ENCODE measurements at regions of chr6 and their contacts with region 1.

Region 1: GRCh38 chr6:161418463-161418945 is 144.6 kb upstream of the AGPAT4 start:
- DNase-seq: peak; percentile 82
- H3K4me3 Mint-ChIP-seq: no peak overlapping the region
- H3K27ac Mint-ChIP-seq: no peak overlapping the region
- H3K4me1 Mint-ChIP-seq: no peaks in the 10 kb centered on the region
- H3K27me3 Mint-ChIP-seq: no peaks in the 10 kb centered on the region
- CTCF ChIP-seq: peak; percentile 70

Region 2: GRCh38 chr6:160899671-160900430 is 518.7 kb before region 1 on chr6:
- CTCF ChIA-PET with region 1: no interaction called
- POLR2A ChIA-PET with region 1: no interaction called
- intact Hi-C with region 1: no loop called
- DNase-seq: no peak
- H3K4me3 Mint-ChIP-seq: no peak overlapping the region
- H3K27ac Mint-ChIP-seq: no peak overlapping the region
- H3K4me1 Mint-ChIP-seq: no peaks in the 10 kb centered on the region
- H3K27me3 Mint-ChIP-seq: no peaks in the 10 kb centered on the region
- CTCF ChIP-seq: no peak

Region 3: GRCh38 chr6:161228921-161229591 is 189.4 kb before region 1 on chr6:
- CTCF ChIA-PET with region 1: no interaction called
- POLR2A ChIA-PET with region 1: no interaction called
- intact Hi-C with region 1: no loop called
- DNase-seq: peak; percentile 49
- H3K4me3 Mint-ChIP-seq: no peak overlapping the region
- H3K27ac Mint-ChIP-seq: no peak overlapping the region
- H3K4me1 Mint-ChIP-seq: peaks cover 19% of the 10 kb centered on the region
- H3K27me3 Mint-ChIP-seq: no peaks in the 10 kb centered on the region
- CTCF ChIP-seq: no peak

Region 4: GRCh38 chr6:161393839-161394364 is 24.6 kb before region 1 on chr6:
- CTCF ChIA-PET with region 1: interaction called, 77 read pairs
- POLR2A ChIA-PET with region 1: interaction called, 6 read pairs
- intact Hi-C with region 1: loop called (anchors 1 kb)
- DNase-seq: peak; percentile 91
- H3K4me3 Mint-ChIP-seq: no peak overlapping the region
- H3K27ac Mint-ChIP-seq: no peak overlapping the region
- H3K4me1 Mint-ChIP-seq: peaks cover 7% of the 10 kb centered on the region
- H3K27me3 Mint-ChIP-seq: no peaks in the 10 kb centered on the region
- CTCF ChIP-seq: peak; percentile 56

Region 5: DNA sequence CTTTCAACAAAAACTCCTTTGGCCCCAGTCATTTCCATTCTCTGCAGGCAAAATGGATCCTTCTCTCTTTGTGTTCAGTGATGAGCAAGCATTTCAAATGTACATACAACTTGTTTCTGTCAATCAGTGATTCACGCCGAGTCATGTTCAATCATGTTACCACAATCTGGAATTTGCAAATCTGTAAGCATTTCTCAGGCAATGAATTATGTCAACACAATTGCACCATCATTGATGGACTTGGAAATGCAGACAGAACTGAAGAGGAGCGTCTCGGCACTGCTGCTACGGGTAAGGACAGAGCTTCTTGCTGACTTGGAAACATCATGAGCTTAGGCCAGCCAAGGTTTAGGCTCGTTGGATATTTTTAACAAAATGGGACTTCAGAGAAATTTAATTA is 11.9 kb before region 1 on chr6:
- CTCF ChIA-PET with region 1: interaction called, 19 read pairs
- POLR2A ChIA-PET with region 1: interaction called, 20 read pairs
- intact Hi-C with region 1: no loop called
- DNase-seq: peak; percentile 97
- H3K4me3 Mint-ChIP-seq: peak overlapping the region; percentile 20
- H3K27ac Mint-ChIP-seq: peak overlapping the region; percentile 73
- H3K4me1 Mint-ChIP-seq: peaks cover 17% of the 10 kb centered on the region
- H3K27me3 Mint-ChIP-seq: no peaks in the 10 kb centered on the region
- CTCF ChIP-seq: no peak

Region 6: GRCh38 chr6:161439093-161439492 is 20.6 kb after region 1 on chr6:
- CTCF ChIA-PET with region 1: interaction called, 28 read pairs
- POLR2A ChIA-PET with region 1: interaction called, 6 read pairs
- intact Hi-C with region 1: no loop called
- DNase-seq: peak; percentile 97
- H3K4me3 Mint-ChIP-seq: peak overlapping the region; percentile 40
- H3K27ac Mint-ChIP-seq: peak overlapping the region; percentile 53
- H3K4me1 Mint-ChIP-seq: peaks cover 18% of the 10 kb centered on the region
- H3K27me3 Mint-ChIP-seq: no peaks in the 10 kb centered on the region
- CTCF ChIP-seq: no peak

Region 7: GRCh38 chr6:161498359-161498758 is 79.9 kb after region 1 on chr6:
- CTCF ChIA-PET with region 1: interaction called, 118 read pairs
- POLR2A ChIA-PET with region 1: interaction called, 7 read pairs
- intact Hi-C with region 1: loop called (anchors 1 kb)
- DNase-seq: peak; percentile 80
- H3K4me3 Mint-ChIP-seq: no peak overlapping the region
- H3K27ac Mint-ChIP-seq: peak overlapping the region; percentile 53
- H3K4me1 Mint-ChIP-seq: peaks cover 5% of the 10 kb centered on the region
- H3K27me3 Mint-ChIP-seq: no peaks in the 10 kb centered on the region
- CTCF ChIP-seq: peak; percentile 62

Region 8: GRCh38 chr6:161694995-161695394 is 276.5 kb after region 1 on chr6:
- CTCF ChIA-PET with region 1: interaction called, 9 read pairs
- POLR2A ChIA-PET with region 1: no interaction called
- intact Hi-C with region 1: loop called (anchors 1 kb)
- DNase-seq: peak; percentile 45
- H3K4me3 Mint-ChIP-seq: no peak overlapping the region
- H3K27ac Mint-ChIP-seq: no peak overlapping the region
- H3K4me1 Mint-ChIP-seq: no peaks in the 10 kb centered on the region
- H3K27me3 Mint-ChIP-seq: no peaks in the 10 kb centered on the region
- CTCF ChIP-seq: peak; percentile 35

Measured in MCF 10A (cell line).